B cell (primary cell): ENCODE measurements at regions of chr6 and their contacts with region 1.

Region 1: DNA sequence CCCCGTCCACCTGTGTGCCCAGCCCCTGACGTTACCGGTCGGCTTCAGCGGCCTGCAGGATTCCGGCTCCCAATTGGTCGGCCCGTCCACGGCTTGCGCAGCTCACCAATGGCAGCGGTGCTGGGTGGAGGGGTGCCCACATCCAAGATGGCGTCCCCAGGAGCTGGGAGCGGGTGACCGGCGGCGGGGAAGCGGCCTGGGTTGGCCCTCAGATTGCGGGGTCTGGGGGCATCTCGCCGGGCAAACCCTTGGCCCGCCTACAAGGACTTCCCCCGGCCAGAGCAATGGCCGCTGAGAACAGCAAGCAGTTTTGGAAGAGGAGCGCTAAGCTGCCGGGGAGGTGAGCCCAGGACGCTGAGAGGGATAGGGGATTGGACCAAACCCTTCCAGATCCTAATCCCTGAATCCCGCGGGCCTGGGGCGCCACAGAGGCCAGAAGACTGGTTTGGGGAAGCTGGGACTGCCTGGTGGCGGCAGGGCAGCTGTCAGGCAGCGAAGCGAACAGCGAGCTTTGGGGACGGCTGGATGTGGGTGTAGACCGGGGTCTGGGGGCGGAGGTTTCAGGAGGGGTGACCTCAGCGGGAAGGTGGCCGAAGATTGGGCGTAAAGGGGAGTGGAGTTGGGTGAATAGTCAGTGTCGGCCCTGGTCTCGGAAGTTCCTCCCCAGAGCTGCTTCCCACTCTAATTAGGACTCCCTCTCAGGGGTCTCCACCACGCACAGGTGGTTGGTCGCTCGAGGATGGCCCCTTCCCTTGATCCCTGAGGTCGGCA is at the starts of genes TBC1D22B and TMEM217:
- DNase-seq: peak; percentile 95
- ATAC-seq: peak; percentile 100
- H3K4me3 ChIP-seq: peak within 1 kb of the TSS; percentile 77 to 97 (median 83)
- H3K4me3 Mint-ChIP-seq: peak within 1 kb of the TSS; percentile 94
- H3K27ac ChIP-seq: peak within 1 kb of the TSS; percentile 81 to 97
- H3K27ac Mint-ChIP-seq: peak within 1 kb of the TSS; percentile 94
- H3K4me1 ChIP-seq: peaks cover 20 to 21% of the 10 kb centered on the region in 2 donors
- H3K4me1 Mint-ChIP-seq: peaks cover 38% of the 10 kb centered on the region
- H3K27me3 ChIP-seq: no peaks in the 10 kb centered on the region
- H3K27me3 Mint-ChIP-seq: no peaks in the 10 kb centered on the region
- CTCF ChIP-seq: no peak
- total RNA-seq, gene TBC1D22B: 11.2 and 12.5 TPM in 2 replicates
- total RNA-seq, gene TMEM217: 0.19 and 1.2 TPM in 2 replicates

Region 2: DNA sequence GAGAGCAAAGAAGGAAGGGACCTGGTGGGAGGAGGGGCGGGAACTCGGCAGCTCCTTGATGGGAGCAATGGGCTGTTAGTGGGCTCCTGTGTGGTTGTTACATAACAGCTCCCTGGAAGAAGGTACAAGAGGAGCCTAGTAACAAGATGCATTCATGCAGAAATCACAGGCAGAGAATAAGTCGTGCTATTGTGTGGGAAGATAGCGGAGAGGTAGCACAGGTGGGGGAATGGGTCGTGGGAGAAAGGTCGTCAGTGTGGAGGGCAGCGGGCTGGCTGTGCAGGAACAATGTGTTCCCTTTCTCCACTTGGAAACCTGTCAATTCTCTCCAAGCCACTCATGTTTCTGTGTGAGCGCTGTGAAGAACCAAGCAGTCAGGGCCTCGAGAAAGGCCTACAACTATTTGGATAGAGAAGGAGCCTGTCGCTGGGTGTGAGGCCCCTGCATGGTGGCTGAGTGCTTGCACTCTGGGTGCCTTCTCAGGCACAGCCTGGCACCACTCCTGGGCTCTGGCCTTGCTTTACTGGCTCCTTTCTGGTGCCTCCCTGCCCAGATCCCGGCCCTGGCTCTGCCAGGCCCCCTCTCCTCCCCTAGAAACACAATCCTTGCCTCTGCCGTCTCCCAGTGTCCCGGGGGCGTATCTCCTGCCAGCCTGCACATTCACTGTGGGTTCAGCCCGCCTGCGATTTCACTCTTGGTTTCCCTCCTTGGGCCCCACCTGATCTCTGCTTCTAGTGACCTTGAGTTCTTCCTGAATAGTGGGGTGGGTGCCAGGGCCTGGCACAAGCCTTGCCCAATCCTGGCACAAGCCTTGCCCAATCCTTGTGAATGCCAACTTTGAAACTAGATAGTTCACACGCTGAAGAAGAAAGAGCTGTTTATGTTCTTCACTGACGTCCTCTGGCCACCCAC is 259.8 kb before region 1 on chr6:
- CTCF ChIA-PET with region 1: no interaction called
- POLR2A ChIA-PET with region 1: no interaction called
- intact Hi-C with region 1: no loop called
- DNase-seq: no peak
- ATAC-seq: no peak
- H3K4me3 ChIP-seq: no peak overlapping the region
- H3K4me3 Mint-ChIP-seq: no peak overlapping the region
- H3K27ac ChIP-seq: no peak overlapping the region
- H3K27ac Mint-ChIP-seq: no peak overlapping the region
- H3K4me1 ChIP-seq: peaks cover 18 to 31% of the 10 kb centered on the region in 2 donors
- H3K4me1 Mint-ChIP-seq: peaks cover 40% of the 10 kb centered on the region
- H3K27me3 ChIP-seq: no peaks in the 10 kb centered on the region
- H3K27me3 Mint-ChIP-seq: no peaks in the 10 kb centered on the region
- CTCF ChIP-seq: no peak

Region 3: GRCh38 chr6:37137201-37138090 is 120.4 kb before region 1 on chr6:
- CTCF ChIA-PET with region 1: no interaction called
- POLR2A ChIA-PET with region 1: no interaction called
- intact Hi-C with region 1: no loop called
- DNase-seq: no peak
- ATAC-seq: no peak
- H3K4me3 ChIP-seq: no peak overlapping the region
- H3K4me3 Mint-ChIP-seq: peak overlapping the region; percentile 20
- H3K27ac ChIP-seq: no peak overlapping the region
- H3K27ac Mint-ChIP-seq: no peak overlapping the region
- H3K4me1 ChIP-seq: peaks cover 0 to 3% of the 10 kb centered on the region in 2 donors
- H3K4me1 Mint-ChIP-seq: peaks cover 14% of the 10 kb centered on the region
- H3K27me3 ChIP-seq: no peaks in the 10 kb centered on the region
- H3K27me3 Mint-ChIP-seq: no peaks in the 10 kb centered on the region
- CTCF ChIP-seq: no peak

Region 4: DNA sequence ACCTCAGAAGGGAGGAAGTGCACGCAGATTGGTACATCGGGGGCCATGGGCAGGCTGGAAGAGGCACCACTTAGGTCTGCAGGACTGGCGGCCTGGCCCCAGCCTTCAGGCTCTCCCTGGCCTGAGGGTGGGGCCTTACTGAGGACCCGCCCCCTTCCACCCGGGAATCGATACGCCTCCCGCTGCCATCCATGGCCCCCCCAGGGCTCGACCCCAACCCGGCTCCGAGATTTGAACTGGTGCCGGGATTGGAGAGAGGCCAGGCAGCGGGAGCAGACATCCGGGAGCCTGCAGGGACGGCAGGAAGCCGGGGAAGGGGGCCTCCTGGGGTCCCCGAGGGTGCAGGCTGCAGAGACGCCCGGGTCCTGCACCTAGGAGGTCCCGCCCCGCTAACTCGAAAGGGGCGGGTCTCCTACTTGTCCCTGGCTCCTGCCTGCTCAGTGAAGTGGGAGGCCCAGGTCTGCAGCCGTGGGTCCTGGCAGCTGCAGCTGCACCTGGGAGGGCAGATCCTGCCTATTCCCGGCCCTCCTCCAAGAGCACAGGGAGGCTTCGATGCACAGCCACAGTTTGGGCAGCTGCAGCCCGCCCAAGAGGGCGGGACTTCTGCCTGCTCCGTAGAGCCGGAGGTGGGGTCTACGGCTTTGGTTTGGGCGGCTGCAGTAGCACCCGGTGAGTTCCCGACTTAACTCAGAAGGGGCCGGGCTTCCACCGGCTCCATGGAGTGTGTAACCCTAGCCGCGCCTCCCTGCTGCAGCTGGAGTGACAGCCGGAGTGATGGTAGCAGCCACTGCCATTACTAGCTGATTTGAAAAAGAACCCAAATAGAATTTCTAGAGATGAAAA is 35.5 kb before region 1 on chr6:
- CTCF ChIA-PET with region 1: no interaction called
- POLR2A ChIA-PET with region 1: no interaction called
- intact Hi-C with region 1: loop called (anchors 2 kb)
- DNase-seq: peak; percentile 73
- ATAC-seq: peak; percentile 91
- H3K4me3 ChIP-seq: peak overlapping the region; percentile 38 to 86 (median 69)
- H3K4me3 Mint-ChIP-seq: peak overlapping the region; percentile 91
- H3K27ac ChIP-seq: no peak overlapping the region
- H3K27ac Mint-ChIP-seq: no peak overlapping the region
- H3K4me1 ChIP-seq: peaks cover 5 to 12% of the 10 kb centered on the region in 2 donors
- H3K4me1 Mint-ChIP-seq: peaks cover 11% of the 10 kb centered on the region
- H3K27me3 ChIP-seq: no peaks in the 10 kb centered on the region
- H3K27me3 Mint-ChIP-seq: no peaks in the 10 kb centered on the region
- CTCF ChIP-seq: no peak

Region 5: GRCh38 chr6:37269105-37269504 is 11.3 kb after region 1 on chr6:
- CTCF ChIA-PET with region 1: no interaction called
- POLR2A ChIA-PET with region 1: no interaction called
- intact Hi-C with region 1: no loop called
- DNase-seq: no peak
- ATAC-seq: no peak
- H3K4me3 ChIP-seq: no peak overlapping the region
- H3K4me3 Mint-ChIP-seq: no peak overlapping the region
- H3K27ac ChIP-seq: no peak overlapping the region
- H3K27ac Mint-ChIP-seq: no peak overlapping the region
- H3K4me1 ChIP-seq: no peaks in the 10 kb centered on the region
- H3K4me1 Mint-ChIP-seq: peaks cover 25% of the 10 kb centered on the region
- H3K27me3 ChIP-seq: no peaks in the 10 kb centered on the region
- H3K27me3 Mint-ChIP-seq: no peaks in the 10 kb centered on the region
- CTCF ChIP-seq: no peak